PC-3 (cell line): ENCODE measurements at regions of chr1 and their contacts with region 1.

Region 1: DNA sequence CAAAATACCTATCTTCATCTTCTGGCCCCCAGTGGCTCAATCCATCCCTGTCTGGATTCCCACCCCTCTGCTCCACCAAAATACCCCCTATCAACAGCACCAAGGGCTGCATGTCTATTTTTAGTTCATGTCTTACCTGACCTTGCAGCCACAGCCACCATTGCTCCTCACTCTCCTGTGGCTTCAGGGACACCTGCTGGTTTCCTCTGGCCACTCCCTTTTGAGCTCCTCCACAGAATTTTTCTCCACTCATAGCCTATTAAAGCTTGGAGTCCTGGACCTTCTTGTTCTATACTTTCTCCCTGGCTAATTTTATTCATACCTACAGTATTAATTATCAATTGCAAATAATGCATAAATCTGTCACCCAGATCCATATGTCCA is 125.3 kb upstream of the NGF start:
- DNase-seq: peak; percentile 63
- ATAC-seq: peak; percentile 75
- H3K4me3 ChIP-seq: no peak overlapping the region
- H3K27ac ChIP-seq: no peak overlapping the region
- H3K4me1 ChIP-seq: peaks cover 11% of the 10 kb centered on the region
- H3K27me3 ChIP-seq: no peaks in the 10 kb centered on the region
- CTCF ChIP-seq: peak; percentile 82

Region 2: GRCh38 chr1:115277276-115277675 is 186.1 kb before region 1 on chr1:
- CTCF ChIA-PET with region 1: no interaction called
- POLR2A ChIA-PET with region 1: no interaction called
- intact Hi-C with region 1: loop called (anchors 2 kb)
- DNase-seq: peak; percentile 52
- ATAC-seq: peak; percentile 56
- H3K4me3 ChIP-seq: no peak overlapping the region
- H3K27ac ChIP-seq: no peak overlapping the region
- H3K4me1 ChIP-seq: no peaks in the 10 kb centered on the region
- H3K27me3 ChIP-seq: no peaks in the 10 kb centered on the region
- CTCF ChIP-seq: no peak

Region 3: DNA sequence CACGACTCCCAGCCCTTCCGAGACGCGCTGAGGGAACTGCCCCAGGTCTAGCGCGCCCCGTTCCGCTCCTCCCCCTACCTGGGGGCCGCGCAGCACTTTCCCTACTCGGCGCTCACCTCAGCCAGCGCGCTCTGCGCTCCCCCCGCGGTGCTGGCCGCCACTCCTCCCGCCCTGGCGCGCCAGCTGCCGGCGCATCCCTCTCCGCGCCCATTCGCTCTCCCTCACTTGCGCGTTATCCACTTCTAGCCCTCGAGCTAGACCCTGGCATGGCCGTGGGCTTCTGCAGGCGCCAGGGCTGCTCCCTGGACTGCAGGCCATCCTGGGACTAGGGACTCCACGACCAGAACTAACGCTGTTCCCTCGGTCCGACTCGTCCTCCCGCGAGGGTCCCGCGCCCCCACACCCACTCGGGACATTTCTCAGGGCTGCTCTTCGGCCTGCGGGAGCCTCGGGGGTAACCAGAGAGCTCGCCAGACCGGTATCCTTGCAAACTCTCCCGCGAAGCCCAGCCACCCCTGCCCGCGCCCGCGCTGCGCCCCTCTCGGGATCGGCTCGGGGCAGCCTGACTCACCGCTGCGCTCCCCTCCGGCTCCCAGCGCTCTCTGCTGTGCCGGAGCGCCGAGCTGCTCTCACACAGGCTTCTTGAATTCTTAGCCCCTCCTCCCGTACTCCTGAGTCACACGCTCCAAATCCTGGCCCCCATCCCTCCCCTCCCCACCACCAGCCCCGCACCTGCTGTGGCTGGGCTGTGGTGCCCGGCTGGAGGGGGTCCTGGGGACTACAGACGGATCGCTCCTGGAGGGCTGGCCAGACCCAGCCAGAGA is 125.5 kb before region 1 on chr1 and contains the start of gene NGF:
- CTCF ChIA-PET with region 1: interaction called, 10 read pairs
- POLR2A ChIA-PET with region 1: no interaction called
- intact Hi-C with region 1: no loop called
- DNase-seq: peak; percentile 67
- ATAC-seq: peak; percentile 88
- H3K4me3 ChIP-seq: peak within 1 kb of the TSS; percentile 99
- H3K27ac ChIP-seq: no peak within 1 kb of the TSS
- H3K4me1 ChIP-seq: peaks cover 8% of the 10 kb centered on the region; the same call in 1 of the 2 replicates
- H3K27me3 ChIP-seq: no peaks in the 10 kb centered on the region
- CTCF ChIP-seq: no peak
- total RNA-seq, gene NGF: 0.86 and 2.4 TPM in 2 replicates